K562 (cell line): ENCODE measurements at regions of chr2 and their contacts with region 1.

Region 1: GRCh38 chr2:152335010-152335725 is at the start of gene FMNL2:
- DNase-seq: peak; percentile 76 to 85 (median 81)
- ATAC-seq: peak; percentile 99
- H3K4me3 ChIP-seq: peak within 1 kb of the TSS; percentile 82
- H3K27ac ChIP-seq: no peak within 1 kb of the TSS
- H3K4me1 ChIP-seq: peaks cover 0 to 17% of the 10 kb centered on the region in 2 experiments; a peak in 3 of 5 replicates
- H3K27me3 ChIP-seq: peaks cover 18 to 25% of the 10 kb centered on the region in 2 experiments
- CTCF ChIP-seq: no peak
- EP300 ChIP-seq: no peak
- POLR2A ChIP-seq: no peak
- RAD21 ChIP-seq: no peak
- polyA plus RNA-seq, gene FMNL2: 0.15 to 0.49 TPM

Region 2: DNA sequence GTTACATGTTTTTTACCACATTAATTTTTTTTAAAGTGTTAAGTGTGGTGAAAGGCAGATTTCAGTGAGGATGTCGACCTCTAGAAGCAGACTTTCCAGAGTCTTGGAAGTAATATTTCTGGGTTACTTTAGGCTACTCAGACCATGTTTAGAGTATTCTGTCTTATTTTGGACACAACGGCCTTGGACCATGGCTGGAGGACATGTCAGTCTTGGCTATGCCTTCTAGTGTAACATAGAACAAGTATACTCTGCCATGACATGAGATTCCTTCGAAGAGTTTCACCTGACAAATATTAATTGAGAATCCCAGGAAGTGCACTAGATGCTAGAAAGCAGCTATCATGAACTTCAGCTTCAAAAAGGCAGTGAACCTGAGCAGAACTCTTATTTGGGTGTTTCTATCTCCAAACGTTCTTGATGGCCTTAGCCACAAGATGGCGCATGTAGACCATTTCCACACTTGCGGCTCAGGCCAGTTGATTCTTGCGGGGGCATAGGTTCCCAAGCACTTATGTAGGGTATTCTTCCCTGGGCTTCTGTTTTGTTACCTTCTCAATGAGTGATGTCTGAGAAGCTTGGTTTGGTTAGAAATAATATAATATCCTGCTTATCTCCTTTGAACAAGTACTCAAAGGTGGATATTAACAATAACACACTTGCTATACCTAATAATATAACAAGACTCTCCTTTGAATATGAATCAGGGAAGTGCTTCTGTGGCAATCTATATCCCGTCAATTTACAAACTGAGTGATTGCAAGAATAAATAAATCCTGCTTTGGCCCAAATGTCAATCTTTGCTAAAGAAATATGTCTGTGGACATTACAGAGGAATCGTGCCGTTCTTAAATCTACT is 298.3 kb before region 1 on chr2:
- CTCF ChIA-PET with region 1: no interaction called
- POLR2A ChIA-PET with region 1: no interaction called
- in situ Hi-C with region 1: no loop called
- intact Hi-C with region 1: loop called (anchors 10 kb)
- DNase-seq: peak; percentile 58 to 84 (median 66)
- ATAC-seq: peak; percentile 93
- H3K4me3 ChIP-seq: no peak overlapping the region
- H3K27ac ChIP-seq: no peak overlapping the region
- H3K4me1 ChIP-seq: no peaks in the 10 kb centered on the region
- H3K27me3 ChIP-seq: peaks cover 13 to 41% of the 10 kb centered on the region in 2 experiments; a peak in 4 of 5 replicates
- CTCF ChIP-seq: peak; percentile 83 to 93 (median 86)
- EP300 ChIP-seq: no peak
- POLR2A ChIP-seq: no peak
- RAD21 ChIP-seq: peak; percentile 97

Region 3: DNA sequence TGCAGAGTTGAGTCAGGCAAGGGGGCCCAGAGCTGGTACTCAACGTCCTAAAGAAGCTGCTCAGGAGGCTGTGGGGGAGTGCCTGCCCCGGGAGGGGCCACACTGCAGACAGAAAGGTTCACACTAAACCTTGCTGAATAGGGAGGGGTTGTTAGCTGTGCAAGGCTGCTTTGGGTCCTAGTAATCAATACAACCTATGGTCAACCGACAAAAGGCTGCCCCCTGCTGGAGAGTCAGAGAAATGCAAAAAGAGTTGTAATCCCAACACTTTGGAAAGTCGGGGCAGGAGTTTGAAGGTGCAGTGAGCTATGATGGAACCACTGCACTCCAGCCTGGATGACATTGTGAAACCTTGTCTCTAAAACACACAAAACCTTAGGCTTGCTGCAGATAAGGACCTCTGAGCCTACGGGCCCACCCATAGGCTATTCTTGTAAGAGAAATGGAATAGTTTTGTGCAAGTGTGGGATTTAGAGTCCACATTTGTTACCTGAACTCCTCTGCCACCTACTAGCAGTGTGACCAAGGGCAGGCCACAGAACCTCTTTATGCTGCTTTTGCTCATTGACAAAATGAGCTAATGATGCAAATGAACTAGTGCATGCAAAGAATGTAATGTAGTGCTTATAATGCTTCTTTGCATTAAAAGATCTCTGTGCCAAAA is 300.6 kb after region 1 on chr2:
- CTCF ChIA-PET with region 1: no interaction called
- POLR2A ChIA-PET with region 1: no interaction called
- in situ Hi-C with region 1: no loop called
- intact Hi-C with region 1: loop called (anchors 10 kb)
- DNase-seq: peak; percentile 73 to 84 (median 78)
- ATAC-seq: peak; percentile 84
- H3K4me3 ChIP-seq: no peak overlapping the region
- H3K27ac ChIP-seq: no peak overlapping the region
- H3K4me1 ChIP-seq: no peaks in the 10 kb centered on the region
- H3K27me3 ChIP-seq: peaks cover 10 to 18% of the 10 kb centered on the region in 2 experiments; a peak in 3 of 5 replicates
- CTCF ChIP-seq: peak; percentile 74 to 85 (median 84)
- EP300 ChIP-seq: no peak
- POLR2A ChIP-seq: no peak
- RAD21 ChIP-seq: peak; percentile 82 to 89